Kidney (tissue), 22 donors: ENCODE measurements at regions of chr10 and their contacts with region 1.

Region 1: DNA sequence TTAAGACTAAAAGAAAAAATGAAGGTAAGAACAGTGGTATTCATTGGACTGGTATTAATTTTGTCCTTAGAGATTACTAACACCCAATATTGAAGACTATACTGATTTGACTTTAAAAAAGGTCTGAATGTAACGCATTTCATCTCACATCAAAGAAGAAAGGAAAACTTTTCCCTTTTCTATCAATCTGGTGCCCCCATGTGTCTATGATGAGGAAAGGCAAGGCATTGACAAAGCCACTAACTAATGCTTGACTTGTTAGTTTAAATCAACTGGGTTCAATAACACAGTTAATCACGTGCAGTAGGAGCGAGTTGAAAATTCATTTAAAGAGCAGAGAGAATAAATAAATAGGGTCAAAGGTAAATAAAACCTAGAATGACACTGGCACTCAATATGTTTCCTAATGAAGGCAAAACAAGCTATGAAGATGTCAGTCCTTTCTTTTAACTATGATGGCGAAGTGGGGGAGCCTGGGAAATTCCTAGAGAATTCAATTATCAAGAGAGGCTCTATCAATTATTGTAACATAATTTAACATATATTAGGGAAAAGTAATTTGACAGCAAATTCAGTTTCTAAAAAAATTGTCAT is 180.9 kb downstream of the ANK3 start:
- DNase-seq: peak in 2 of 5 donors; percentile 33 to 62
- H3K4me3 ChIP-seq: no peak overlapping the region
- H3K27ac ChIP-seq: no peak overlapping the region
- H3K4me1 ChIP-seq: peaks cover 0 to 6% (median 2%) of the 10 kb centered on the region in 3 donors
- H3K27me3 ChIP-seq: no peaks in the 10 kb centered on the region
- CTCF ChIP-seq: peak; percentile 68

Region 2: DNA sequence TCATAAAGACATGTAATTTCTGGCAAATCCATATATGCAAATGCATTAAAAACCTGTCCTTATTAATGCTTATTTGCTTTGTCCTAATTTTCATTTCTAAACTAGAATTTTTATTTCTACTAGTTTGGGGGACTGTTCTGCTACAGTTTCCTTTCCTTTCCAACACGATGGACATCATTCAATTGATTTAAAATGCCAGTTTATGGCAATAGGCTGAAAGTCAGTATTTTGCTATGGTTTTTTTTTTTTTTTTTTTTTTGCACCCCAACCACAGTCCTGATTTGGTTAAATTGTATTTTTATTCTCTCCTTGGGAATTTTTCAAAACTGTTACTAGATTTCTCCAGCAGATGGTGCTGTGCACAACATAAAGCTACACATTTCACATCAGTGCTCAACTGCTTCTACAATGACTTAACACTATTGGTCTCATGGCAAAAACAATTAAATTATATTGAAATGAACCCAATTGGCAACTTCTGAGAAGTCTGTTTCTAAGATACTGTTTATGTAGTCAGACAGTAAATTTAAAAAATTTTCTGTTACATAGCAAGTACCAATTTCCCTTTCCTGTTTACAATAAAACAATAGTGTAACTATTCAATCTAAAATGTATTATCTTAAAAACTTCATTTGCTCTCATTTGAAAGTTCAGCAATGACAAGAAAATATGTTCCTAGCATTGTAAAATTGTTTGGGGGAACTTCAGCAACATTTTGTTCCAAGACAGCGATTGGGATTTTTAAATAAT is 108.6 kb before region 1 on chr10:
- intact Hi-C with region 1: loop called (anchors 10 kb)
- DNase-seq: peak in 2 of 5 donors; percentile 71 to 87
- H3K4me3 ChIP-seq: no peak overlapping the region
- H3K27ac ChIP-seq: no peak overlapping the region
- H3K4me1 ChIP-seq: peaks cover 0 to 11% (median 3%) of the 10 kb centered on the region in 3 donors
- H3K27me3 ChIP-seq: no peaks in the 10 kb centered on the region
- CTCF ChIP-seq: peak; percentile 56

Region 3: DNA sequence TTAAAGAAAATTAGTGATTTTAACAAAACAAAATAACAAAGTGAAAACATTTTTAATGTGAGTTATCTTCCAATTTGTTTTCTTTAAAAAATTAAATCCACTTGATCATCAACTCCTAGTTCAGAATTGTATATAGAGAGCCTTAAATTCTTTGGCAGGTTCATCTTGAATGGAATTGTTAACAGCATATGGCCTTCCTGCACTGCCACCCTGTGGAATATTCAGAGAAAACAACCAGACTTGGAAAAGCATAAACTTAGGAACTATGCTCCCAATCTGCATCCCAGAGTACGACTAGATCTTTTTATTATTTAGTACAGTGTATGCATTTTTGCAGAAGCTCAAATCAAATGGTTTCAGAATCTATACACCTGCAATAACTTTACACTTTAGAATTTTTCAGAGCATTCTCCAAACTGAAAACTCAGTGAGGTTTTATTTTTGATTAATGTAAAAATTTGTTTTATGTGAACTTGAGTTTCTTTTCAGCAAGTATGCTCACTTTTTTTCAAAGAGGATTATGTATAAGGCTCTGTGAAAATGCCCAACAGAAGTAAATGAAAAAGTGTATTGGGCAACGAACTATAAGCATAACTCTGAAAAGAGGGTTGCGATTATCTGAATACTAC is 225.8 kb after region 1 on chr10:
- intact Hi-C with region 1: loop called (anchors 10 kb)
- DNase-seq: peak in 3 of 5 donors; percentile 45 to 79 (median 53)
- H3K4me3 ChIP-seq: no peak overlapping the region
- H3K27ac ChIP-seq: no peak overlapping the region
- H3K4me1 ChIP-seq: no peaks in the 10 kb centered on the region
- H3K27me3 ChIP-seq: no peaks in the 10 kb centered on the region
- CTCF ChIP-seq: peak; percentile 85